ENCODE measurements at regions of chr2 and their contacts with region 1.

Region 1: GRCh38 chr2:219245148-219245898 is at the starts of genes GLB1L and STK16:
- DNase-seq: peak; percentile 91 to 99 (median 94)

Region 2: DNA sequence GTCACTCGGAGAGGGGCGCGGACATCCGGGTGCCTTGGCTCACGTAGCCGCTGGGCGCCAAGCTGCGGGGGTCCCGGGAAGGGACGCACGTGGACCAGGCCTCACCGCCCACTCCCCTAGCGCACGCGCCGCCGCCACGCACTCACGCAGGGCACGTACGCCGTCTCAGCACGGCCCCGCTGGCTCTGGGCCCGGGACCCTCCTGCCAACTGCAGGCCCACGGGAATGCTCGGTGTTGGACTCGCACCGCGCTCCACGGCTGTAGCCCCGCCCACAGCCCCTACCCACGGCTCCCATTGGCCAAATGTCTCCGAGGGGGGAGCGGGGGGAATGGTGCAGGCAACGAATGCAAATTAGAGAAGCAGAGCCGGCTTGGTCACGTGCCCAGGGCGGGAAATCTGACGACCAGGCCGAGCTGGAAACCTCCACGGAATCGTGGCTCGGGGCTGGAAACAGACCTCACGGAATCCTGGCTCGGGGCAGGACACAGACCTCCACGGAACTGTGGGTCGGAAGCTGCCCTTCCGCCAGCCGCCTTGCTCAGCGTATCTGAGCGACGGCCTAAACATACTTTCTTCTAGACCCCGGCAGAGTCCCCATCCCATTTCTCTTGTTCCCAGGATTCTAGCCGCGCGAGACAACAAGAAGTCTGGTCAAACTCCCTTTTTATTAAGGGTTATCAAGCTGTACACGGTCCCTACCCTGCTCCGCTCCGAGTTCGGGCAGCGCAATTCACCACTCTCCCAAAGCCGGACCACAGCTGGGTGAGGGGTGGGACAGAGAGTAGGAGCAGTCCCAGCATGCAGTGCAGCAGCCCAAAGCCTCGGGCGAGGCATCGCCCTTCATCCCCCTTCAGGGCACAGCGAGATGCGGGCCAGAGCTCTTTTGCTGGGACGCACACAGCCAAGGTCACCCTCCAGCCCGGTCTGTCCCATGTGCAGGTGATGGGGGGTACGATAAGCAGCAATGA is 26.3 kb before region 1 on chr2 and contains the start of gene ABCB6:
- intact Hi-C with region 1: loop called (anchors 1 kb)
- DNase-seq: peak; percentile 96 to 100 (median 98)

Region 3: GRCh38 chr2:219278655-219279516 is 33.6 kb after region 1 on chr2 and contains the start of gene DNAJB2:
- intact Hi-C with region 1: no loop called
- DNase-seq: peak; percentile 98 to 100 (median 99)

Region 4: GRCh38 chr2:219378163-219378851 is 133.0 kb after region 1 on chr2:
- intact Hi-C with region 1: no loop called
- DNase-seq: no peak